BJ (cell line): ENCODE measurements at regions of chr15 and their contacts with region 1.

Region 1: DNA sequence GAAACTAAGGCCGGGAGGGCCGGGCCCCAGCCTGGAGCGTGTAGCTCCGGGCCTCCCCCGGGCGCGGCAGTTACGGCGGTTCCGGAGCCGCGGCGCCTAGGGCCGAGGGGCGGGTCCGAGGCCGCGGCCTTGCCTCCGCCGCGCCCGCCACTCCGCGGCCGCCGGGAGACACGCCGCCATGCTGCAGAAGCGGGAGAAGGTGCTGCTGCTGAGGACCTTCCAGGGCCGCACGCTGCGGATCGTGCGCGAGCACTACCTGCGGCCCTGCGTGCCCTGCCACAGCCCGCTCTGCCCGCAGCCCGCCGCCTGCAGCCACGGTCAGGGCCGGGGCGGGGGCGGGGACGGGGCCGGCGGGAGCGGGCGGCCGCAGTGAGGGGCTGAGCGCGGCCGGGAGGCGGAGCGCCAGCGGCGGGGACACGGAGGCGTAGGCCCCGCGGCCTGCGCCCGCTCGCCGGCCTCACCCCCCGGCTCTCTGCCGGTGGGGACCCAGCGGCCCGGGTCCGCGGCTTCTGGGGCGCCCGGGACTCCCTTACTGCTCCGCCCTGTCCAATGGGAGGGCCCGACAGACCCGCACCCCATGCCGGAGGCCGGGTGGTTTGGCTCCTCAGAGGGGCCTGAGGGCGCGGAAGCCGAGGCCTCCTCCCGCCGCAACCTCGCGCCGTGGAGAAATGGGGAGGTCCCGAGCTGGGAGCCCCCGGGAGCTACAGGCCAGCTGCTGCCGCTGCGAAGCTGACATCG is at the start of gene DIS3L:
- DNase-seq: no peak
- H3K4me3 ChIP-seq: peak within 1 kb of the TSS; percentile 51
- H3K27me3 ChIP-seq: no peaks in the 10 kb centered on the region
- CTCF ChIP-seq: no peak
- polyA plus RNA-seq, gene DIS3L: 9.2 and 15.6 TPM in 2 replicates

Region 2: GRCh38 chr15:65792130-65792987 is 501.2 kb before region 1 on chr15 and contains the start of gene DENND4A:
- CTCF ChIA-PET with region 1: no interaction called
- POLR2A ChIA-PET with region 1: interaction called, 15 read pairs
- DNase-seq: peak; percentile 84
- H3K4me3 ChIP-seq: peak within 1 kb of the TSS; percentile 89
- H3K27me3 ChIP-seq: no peaks in the 10 kb centered on the region
- CTCF ChIP-seq: no peak
- polyA plus RNA-seq, gene DENND4A: 5.1 and 11.0 TPM in 2 replicates

Region 3: GRCh38 chr15:66108483-66109265 is 184.9 kb before region 1 on chr15:
- CTCF ChIA-PET with region 1: no interaction called
- POLR2A ChIA-PET with region 1: no interaction called
- DNase-seq: no peak
- H3K4me3 ChIP-seq: no peak overlapping the region
- H3K27me3 ChIP-seq: peaks cover 4% of the 10 kb centered on the region
- CTCF ChIP-seq: no peak